ENCODE measurements at regions of chr20 and their contacts with region 1.

Region 1: GRCh38 chr20:3204124-3204822 is at the start of gene DDRGK1:
- DNase-seq: peak; percentile 80 to 94 (median 88)
- ATAC-seq: peak; percentile 86
- H3K4me3 ChIP-seq: peak within 1 kb of the TSS; percentile 99
- H3K4me3 Mint-ChIP-seq: peak within 1 kb of the TSS; percentile 96
- H3K27ac ChIP-seq: peak within 1 kb of the TSS; percentile 78 to 83
- H3K27ac Mint-ChIP-seq: peak within 1 kb of the TSS; percentile 92
- H3K4me1 ChIP-seq: peaks cover 34% of the 10 kb centered on the region
- H3K4me1 Mint-ChIP-seq: peaks cover 29% of the 10 kb centered on the region
- H3K27me3 ChIP-seq: no peaks in the 10 kb centered on the region
- H3K27me3 Mint-ChIP-seq: no peaks in the 10 kb centered on the region
- CTCF ChIP-seq: no peak
- total RNA-seq, gene DDRGK1: 40.7 to 43.4 TPM

Region 2: GRCh38 chr20:3045816-3046676 is 158.2 kb before region 1 on chr20 and contains the start of gene MRPS26:
- CTCF ChIA-PET with region 1: no interaction called
- POLR2A ChIA-PET with region 1: no interaction called
- intact Hi-C with region 1: loop called in 1 of 2 experiments (anchors 10 kb)
- DNase-seq: peak; percentile 57 to 87 (median 76)
- ATAC-seq: peak; percentile 86
- H3K4me3 ChIP-seq: peak within 1 kb of the TSS; percentile 76
- H3K4me3 Mint-ChIP-seq: peak within 1 kb of the TSS; percentile 95
- H3K27ac ChIP-seq: peak within 1 kb of the TSS; percentile 48 to 49
- H3K27ac Mint-ChIP-seq: peak within 1 kb of the TSS; percentile 83
- H3K4me1 ChIP-seq: peaks cover 27% of the 10 kb centered on the region
- H3K4me1 Mint-ChIP-seq: peaks cover 21% of the 10 kb centered on the region
- H3K27me3 ChIP-seq: no peaks in the 10 kb centered on the region
- H3K27me3 Mint-ChIP-seq: no peaks in the 10 kb centered on the region
- CTCF ChIP-seq: no peak
- total RNA-seq, gene MRPS26: 19.3 to 22.7 TPM

Region 3: GRCh38 chr20:3135507-3136070 is 68.7 kb before region 1 on chr20:
- CTCF ChIA-PET with region 1: no interaction called
- POLR2A ChIA-PET with region 1: no interaction called
- intact Hi-C with region 1: no loop called
- DNase-seq: no peak
- ATAC-seq: no peak
- H3K4me3 ChIP-seq: no peak overlapping the region
- H3K4me3 Mint-ChIP-seq: no peak overlapping the region
- H3K27ac ChIP-seq: no peak overlapping the region
- H3K27ac Mint-ChIP-seq: peak overlapping the region; percentile 7
- H3K4me1 ChIP-seq: no peaks in the 10 kb centered on the region
- H3K4me1 Mint-ChIP-seq: peaks cover 31% of the 10 kb centered on the region
- H3K27me3 ChIP-seq: no peaks in the 10 kb centered on the region
- H3K27me3 Mint-ChIP-seq: no peaks in the 10 kb centered on the region
- CTCF ChIP-seq: no peak

Region 4: GRCh38 chr20:3162080-3162611 is 42.1 kb before region 1 on chr20:
- CTCF ChIA-PET with region 1: no interaction called
- POLR2A ChIA-PET with region 1: interaction called, 12 read pairs
- intact Hi-C with region 1: loop called in 1 of 2 experiments (anchors 5 kb)
- DNase-seq: no peak
- ATAC-seq: no peak
- H3K4me3 ChIP-seq: no peak overlapping the region
- H3K4me3 Mint-ChIP-seq: peak overlapping the region; percentile 85
- H3K27ac ChIP-seq: no peak overlapping the region
- H3K27ac Mint-ChIP-seq: peak overlapping the region; percentile 47
- H3K4me1 ChIP-seq: peaks cover 30% of the 10 kb centered on the region
- H3K4me1 Mint-ChIP-seq: peaks cover 34% of the 10 kb centered on the region
- H3K27me3 ChIP-seq: peaks cover 7 to 9% of the 10 kb centered on the region in 2 experiments
- H3K27me3 Mint-ChIP-seq: no peaks in the 10 kb centered on the region
- CTCF ChIP-seq: no peak